IMR-90 (cell line): ENCODE measurements at regions of chr12 and their contacts with region 1.

Region 1: DNA sequence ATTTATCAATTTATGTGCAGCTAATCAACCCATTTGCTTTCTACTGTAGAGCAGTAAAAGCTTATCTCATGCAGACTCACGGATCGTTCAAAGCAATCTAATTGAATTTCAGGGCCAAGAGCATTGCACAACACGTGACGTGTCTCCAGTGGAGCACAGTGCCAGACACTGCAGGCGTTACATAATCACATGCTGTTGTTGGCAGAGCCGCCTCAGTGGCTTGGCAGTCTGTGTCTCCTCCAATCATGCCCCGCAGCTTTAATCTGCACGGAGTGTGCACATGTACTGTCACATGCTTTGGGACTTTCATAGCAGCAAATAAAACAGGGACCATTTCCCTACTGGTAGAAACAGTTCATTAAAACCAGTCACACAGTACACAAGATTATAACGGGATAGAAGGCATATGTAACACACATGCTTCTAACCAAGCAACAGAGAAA is 309.3 kb downstream of the ITPR2 start:
- DNase-seq: peak; percentile 93
- ATAC-seq: peak; percentile 95
- H3K4me3 ChIP-seq: no peak overlapping the region
- H3K27ac ChIP-seq: no peak overlapping the region
- H3K4me1 ChIP-seq: no peaks in the 10 kb centered on the region
- H3K27me3 ChIP-seq: no peaks in the 10 kb centered on the region
- CTCF ChIP-seq: no peak
- POLR2A ChIP-seq: no peak
- RAD21 ChIP-seq: no peak

Region 2: GRCh38 chr12:26113853-26114719 is 409.6 kb before region 1 on chr12:
- CTCF ChIA-PET with region 1: interaction called, 4 read pairs
- POLR2A ChIA-PET with region 1: no interaction called
- dilution Hi-C with region 1: no loop called
- in situ Hi-C with region 1: no loop called
- intact Hi-C with region 1: loop called (anchors 2 kb)
- DNase-seq: peak; percentile 82
- ATAC-seq: peak; percentile 96
- H3K4me3 ChIP-seq: peak overlapping the region; percentile 58
- H3K27ac ChIP-seq: peak overlapping the region; percentile 51
- H3K4me1 ChIP-seq: peaks cover 4% of the 10 kb centered on the region; the same call in 1 of the 2 replicates
- H3K27me3 ChIP-seq: no peaks in the 10 kb centered on the region; the same call in 1 of the 2 replicates
- CTCF ChIP-seq: 0 out of 2 replicates have a peak, but pooled peaks have one; percentile 19
- POLR2A ChIP-seq: peak; percentile 71
- RAD21 ChIP-seq: no peak